Activated CD4-positive, alpha-beta T cell treated with anti-CD3 and anti-CD28 coated beads, Interleukin-2, amount 10 ng/mL, durations not matched to agents 24 days and 14 days (primary cell): ENCODE measurements at regions of chr16 and their contacts with region 1.

Region 1: GRCh38 chr16:8868416-8869211 is at the start of gene CARHSP1:
- DNase-seq: peak; percentile 95
- H3K4me3 Mint-ChIP-seq: peak within 1 kb of the TSS; percentile 90
- H3K27ac Mint-ChIP-seq: peak within 1 kb of the TSS; percentile 89
- H3K4me1 Mint-ChIP-seq: peaks cover 39% of the 10 kb centered on the region
- H3K27me3 Mint-ChIP-seq: no peaks in the 10 kb centered on the region
- total RNA-seq, gene CARHSP1: 67.7 and 73.3 TPM in 2 replicates

Region 2: DNA sequence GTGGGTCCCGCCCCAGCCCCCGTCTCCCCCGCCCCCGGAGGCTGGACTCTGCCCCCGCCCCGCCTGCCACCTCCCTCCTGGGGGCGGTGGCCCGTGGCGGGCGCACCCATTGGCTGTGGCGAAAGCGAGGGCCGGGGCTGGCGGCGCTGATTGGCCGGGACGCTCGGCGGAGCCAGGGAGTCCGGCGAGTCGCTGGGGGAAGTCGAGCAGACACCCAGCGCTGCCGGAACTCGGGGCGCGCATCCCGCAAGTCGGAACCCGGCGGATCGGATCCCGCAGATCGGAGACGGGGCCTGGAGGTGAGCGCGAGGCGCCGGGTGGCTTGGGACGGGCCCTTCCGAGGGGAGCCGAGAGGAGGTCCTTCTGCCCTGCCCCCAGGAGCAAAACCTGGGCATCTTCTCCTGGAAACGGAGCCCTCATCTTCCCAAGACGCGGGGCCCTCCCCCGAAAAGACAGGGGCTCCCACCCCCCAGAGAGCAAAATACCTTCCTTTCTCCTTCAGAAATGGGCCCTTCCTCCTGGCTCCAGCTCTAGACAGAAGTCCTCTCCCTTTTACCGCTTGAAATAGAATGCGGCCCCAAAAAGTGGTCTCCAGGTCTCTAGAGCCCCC is 194.1 kb before region 1 on chr16 and contains the start of gene ABAT:
- intact Hi-C with region 1: loop called (anchors 2 kb)
- DNase-seq: peak; percentile 97
- H3K4me3 Mint-ChIP-seq: peak within 1 kb of the TSS; percentile 88
- H3K27ac Mint-ChIP-seq: peak within 1 kb of the TSS; percentile 91
- H3K4me1 Mint-ChIP-seq: peaks cover 15% of the 10 kb centered on the region
- H3K27me3 Mint-ChIP-seq: no peaks in the 10 kb centered on the region
- total RNA-seq, gene ABAT: 5.0 and 5.9 TPM in 2 replicates

Region 3: GRCh38 chr16:8850279-8850885 is 18.2 kb before region 1 on chr16:
- intact Hi-C with region 1: loop called (anchors 2 kb)
- DNase-seq: no peak
- H3K4me3 Mint-ChIP-seq: peak overlapping the region; percentile 14
- H3K27ac Mint-ChIP-seq: peak overlapping the region; percentile 80
- H3K4me1 Mint-ChIP-seq: peaks cover 25% of the 10 kb centered on the region
- H3K27me3 Mint-ChIP-seq: no peaks in the 10 kb centered on the region